AG04449 (cell line): ENCODE measurements at regions of chr4 and their contacts with region 1.

Region 1: GRCh38 chr4:53929955-53930798 is 134.2 kb downstream of the CHIC2 start:
- DNase-seq: peak; percentile 71
- H3K4me3 ChIP-seq: no peak overlapping the region
- CTCF ChIP-seq: peak; percentile 74

Region 2: DNA sequence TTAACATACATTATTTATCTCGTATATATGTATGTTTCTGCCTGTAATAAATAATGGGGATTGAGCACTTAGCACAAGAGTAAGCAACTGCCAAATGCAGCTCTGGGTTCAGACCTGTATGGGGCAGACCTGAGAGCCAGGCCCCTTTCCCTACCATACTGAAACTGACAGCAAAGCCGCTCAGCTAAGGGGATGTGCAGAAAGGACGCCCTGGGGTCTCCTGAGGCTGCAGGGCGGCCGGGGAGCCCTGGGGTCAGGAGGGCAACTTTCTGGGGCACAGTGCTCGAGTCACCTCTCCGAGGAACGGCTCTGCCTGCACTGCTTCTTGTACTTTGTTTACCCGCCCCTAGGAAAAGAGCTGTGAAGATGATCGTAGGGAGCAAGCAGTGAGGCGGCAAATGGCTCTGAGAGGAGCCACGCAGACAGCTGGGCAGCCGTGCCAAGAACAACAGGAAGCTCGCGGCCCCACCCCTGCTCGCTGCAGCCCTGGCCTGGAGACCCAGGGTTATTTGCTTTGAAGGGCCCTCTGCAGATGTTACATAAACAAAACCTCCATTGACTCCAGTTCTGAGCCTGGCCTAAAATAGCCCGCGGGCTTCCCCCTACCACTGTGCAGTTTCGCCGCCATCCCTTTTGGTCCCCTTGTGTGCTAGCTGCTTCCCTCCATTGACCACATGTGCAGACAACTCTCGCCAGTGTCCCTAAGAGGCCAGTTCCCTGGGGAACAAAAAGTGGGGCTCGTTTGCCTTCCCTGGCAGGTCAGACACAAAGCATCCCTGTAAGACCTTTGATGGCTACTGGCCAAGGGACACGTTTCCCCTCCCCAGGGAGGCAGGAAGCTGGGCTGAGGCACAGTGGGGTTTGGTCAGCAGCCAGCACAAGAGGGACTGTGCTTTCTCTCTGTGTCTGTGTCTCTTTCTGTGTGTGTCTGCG is 227.6 kb before region 1 on chr4:
- CTCF ChIA-PET with region 1: interaction called, 12 read pairs
- POLR2A ChIA-PET with region 1: no interaction called
- DNase-seq: no peak
- H3K4me3 ChIP-seq: peak overlapping the region; percentile 3; the same call in 1 of the 2 replicates
- CTCF ChIP-seq: no peak

Region 3: DNA sequence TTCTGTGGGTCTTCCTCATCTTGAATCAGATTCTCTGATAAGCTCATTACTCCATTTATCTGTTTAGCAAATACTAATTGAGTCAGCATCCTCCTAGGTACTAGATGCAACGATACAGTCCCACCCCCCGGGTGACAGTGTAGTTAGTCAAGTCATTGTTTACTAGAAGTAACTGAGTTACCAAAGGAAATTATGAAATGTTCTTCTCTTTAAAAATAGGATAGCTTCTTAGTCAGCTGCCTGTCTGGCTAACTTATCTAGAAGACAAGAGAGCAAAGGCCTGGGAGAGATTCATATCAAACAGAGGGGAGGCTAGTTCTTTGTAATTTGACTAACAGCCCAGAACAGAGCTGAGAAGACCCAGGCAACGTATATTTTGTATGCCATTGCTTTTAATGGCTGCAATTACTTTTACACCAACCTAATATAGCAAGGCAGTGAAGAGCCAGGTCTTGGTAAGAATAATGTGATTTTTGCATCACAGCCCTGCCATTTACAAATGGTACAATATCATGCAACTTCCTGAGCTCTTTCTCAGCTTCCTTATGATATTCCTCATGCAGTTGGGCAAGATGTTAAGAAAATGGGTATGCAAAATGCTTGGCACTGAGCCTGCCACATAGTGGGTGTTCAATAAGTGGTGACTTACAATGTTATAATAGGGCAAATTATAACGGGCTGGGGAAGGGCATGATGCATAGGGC is 15.7 kb before region 1 on chr4:
- CTCF ChIA-PET with region 1: interaction called, 64 read pairs
- POLR2A ChIA-PET with region 1: interaction called, 3 read pairs
- DNase-seq: peak; percentile 47
- H3K4me3 ChIP-seq: no peak overlapping the region
- CTCF ChIP-seq: no peak

Region 4: GRCh38 chr4:53920116-53920515 is 10.1 kb before region 1 on chr4:
- CTCF ChIA-PET with region 1: interaction called, 53 read pairs
- POLR2A ChIA-PET with region 1: no interaction called
- DNase-seq: no peak
- H3K4me3 ChIP-seq: no peak overlapping the region
- CTCF ChIP-seq: no peak

Region 5: GRCh38 chr4:53943345-53944085 is 13.3 kb after region 1 on chr4:
- CTCF ChIA-PET with region 1: interaction called, 31 read pairs
- POLR2A ChIA-PET with region 1: no interaction called
- DNase-seq: no peak
- H3K4me3 ChIP-seq: no peak overlapping the region
- CTCF ChIP-seq: no peak

Region 6: DNA sequence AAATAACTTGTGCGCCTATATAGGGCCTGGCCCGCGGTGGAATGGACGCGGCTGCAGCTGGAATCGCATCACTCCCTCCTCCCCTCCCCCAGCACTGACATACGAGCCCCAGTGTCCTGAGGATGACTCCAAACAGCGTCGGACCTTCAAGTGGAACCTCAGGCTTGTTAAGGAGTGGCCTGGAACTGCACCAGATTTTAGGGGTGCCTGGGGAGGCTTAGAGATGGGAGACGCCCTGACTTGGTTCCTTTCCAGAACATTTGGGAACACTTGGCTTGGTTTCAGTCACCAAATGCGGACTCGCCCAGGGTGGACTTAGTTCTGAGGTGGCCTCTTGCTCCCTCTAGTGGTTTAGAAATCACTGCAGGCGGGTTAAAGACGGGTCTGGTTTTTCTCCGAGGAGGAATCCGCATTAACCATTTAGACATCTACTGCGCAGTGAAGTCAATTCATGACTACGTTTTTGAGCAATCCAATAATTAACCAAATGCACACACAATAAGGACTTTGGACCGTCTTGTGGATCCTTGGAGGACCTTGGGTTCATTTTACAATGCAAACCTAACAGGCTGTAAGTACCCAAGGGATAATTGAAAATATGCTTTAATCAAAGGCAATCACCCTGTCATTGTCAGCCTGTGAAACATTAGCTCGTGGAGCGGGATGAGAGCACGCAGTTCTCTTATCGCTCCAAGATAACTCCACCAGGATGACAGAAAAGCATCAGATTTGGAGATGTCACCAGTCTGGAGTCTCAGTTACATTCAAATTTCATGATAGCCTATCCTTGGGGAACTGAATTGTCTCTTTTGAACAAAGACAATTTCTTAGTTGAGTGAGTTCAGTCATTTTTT is 287.7 kb after region 1 on chr4:
- CTCF ChIA-PET with region 1: interaction called, 121 read pairs
- POLR2A ChIA-PET with region 1: no interaction called
- DNase-seq: no peak
- H3K4me3 ChIP-seq: peak overlapping the region; percentile 62
- CTCF ChIP-seq: peak; percentile 76

Region 7: GRCh38 chr4:54228056-54228527 is 297.9 kb after region 1 on chr4:
- CTCF ChIA-PET with region 1: interaction called, 74 read pairs
- POLR2A ChIA-PET with region 1: interaction called, 4 read pairs
- DNase-seq: no peak
- H3K4me3 ChIP-seq: peak overlapping the region; percentile 93
- CTCF ChIP-seq: peak; percentile 97